ENCODE measurements at regions of chr17 and their contacts with region 1.

Region 1: DNA sequence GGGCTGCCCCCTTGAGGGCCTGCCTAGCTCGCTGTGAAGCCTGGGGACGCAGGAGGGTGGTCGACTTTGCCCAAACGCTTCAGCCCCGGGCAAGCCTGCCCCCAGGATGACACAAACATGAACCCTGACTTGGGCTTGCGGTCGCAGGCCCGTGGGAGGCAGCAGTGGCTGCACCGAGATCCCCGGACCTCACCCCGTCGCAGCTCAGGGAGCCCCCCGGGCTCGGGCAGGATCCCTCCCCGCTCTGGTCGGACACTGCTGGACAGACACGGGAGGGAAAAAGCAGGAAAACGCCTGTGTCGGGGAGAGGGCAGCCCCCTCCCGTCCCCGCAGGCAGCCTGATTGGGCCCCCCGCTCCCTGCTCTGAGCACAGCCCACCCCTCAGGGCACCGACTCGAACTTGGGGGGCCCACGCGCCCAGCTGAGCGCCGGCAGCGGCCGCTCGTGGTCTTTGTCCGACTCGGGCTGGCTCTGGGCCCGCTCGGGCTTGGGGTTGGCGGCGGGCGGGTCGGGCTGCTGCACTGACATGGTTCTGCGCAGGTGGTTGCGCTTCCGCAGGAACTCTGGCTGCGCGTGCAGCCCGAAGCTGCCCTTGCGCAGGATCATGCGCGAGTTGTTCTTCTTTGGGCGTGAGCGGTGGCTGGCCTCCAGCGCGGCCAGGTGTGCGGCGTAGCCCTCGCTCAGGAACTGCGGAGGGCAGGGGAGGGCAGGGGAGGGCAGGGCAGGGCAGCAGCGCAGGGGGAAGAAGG is 10.9 kb downstream of the PIMREG start:
- DNase-seq: peak; percentile 46
- ATAC-seq: peak; percentile 96
- H3K4me3 Mint-ChIP-seq: peak overlapping the region; percentile 36
- H3K27ac Mint-ChIP-seq: no peak overlapping the region
- H3K4me1 Mint-ChIP-seq: peaks cover 35% of the 10 kb centered on the region
- H3K27me3 Mint-ChIP-seq: no peaks in the 10 kb centered on the region
- CTCF ChIP-seq: no peak

Region 2: GRCh38 chr17:6427279-6427781 is 27.8 kb before region 1 on chr17:
- CTCF ChIA-PET with region 1: no interaction called
- POLR2A ChIA-PET with region 1: no interaction called
- intact Hi-C with region 1: no loop called
- DNase-seq: no peak
- ATAC-seq: peak; percentile 34
- H3K4me3 Mint-ChIP-seq: peak overlapping the region; percentile 11
- H3K27ac Mint-ChIP-seq: peak overlapping the region; percentile 59
- H3K4me1 Mint-ChIP-seq: peaks cover 10% of the 10 kb centered on the region
- H3K27me3 Mint-ChIP-seq: peaks cover 11% of the 10 kb centered on the region
- CTCF ChIP-seq: no peak

Region 3: DNA sequence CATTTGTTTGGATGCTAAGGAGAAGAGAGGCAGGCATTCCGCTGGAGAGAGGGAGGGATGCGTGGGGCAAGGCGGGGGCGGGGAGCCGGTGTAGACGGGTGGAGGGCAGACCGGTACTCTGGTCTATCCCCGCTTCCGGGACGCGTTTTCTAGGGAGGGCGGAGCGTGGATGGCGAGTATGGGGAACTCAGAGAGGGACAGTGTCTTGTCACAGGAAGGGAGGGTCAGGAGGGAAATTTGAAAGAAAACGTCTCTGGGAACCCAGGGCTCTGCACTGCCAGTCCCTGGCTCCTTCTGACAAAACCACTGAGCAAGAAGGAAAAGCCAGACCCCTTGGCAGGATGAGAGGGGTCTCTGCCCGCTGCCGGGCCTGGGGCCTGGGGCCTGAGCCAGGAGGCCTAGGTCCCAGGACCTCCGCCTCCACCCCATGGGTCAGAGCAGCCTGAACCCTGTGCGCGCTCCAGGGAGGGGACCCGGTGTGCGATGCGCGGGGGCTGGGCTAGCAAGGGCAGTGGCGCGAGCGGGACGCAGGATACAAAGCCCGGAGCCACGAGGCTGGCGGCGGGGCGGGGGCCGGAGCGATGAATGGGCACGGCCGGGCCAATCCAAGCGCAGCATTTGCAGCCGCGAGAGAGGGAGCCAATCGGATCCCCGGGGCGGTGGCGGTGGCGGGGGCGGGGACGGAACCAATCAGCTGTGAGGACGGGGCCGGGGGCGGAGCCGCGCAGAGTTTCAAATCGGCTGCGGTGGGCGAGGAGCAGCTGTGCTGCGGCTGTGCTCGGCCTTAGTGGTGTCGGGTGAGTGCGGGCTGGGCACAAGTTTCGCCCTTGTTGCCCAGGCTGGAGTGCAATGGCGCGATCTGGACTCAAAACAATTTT is 11.2 kb before region 1 on chr17 and contains the start of gene PIMREG:
- CTCF ChIA-PET with region 1: interaction called, 4 read pairs
- POLR2A ChIA-PET with region 1: interaction called, 5 read pairs
- intact Hi-C with region 1: loop called (anchors 1 kb)
- DNase-seq: peak; percentile 83
- ATAC-seq: peak; percentile 94
- H3K4me3 Mint-ChIP-seq: peak within 1 kb of the TSS; percentile 86
- H3K27ac Mint-ChIP-seq: peak within 1 kb of the TSS; percentile 74
- H3K4me1 Mint-ChIP-seq: peaks cover 13% of the 10 kb centered on the region
- H3K27me3 Mint-ChIP-seq: peaks cover 14% of the 10 kb centered on the region
- CTCF ChIP-seq: no peak
- total RNA-seq, gene PIMREG: 0.27 and 0.69 TPM in 2 replicates